Breast epithelium (tissue), 4 donors: ENCODE measurements at regions of chr2 and their contacts with region 1.

Region 1: GRCh38 chr2:122471753-122472152 is 716.3 kb downstream of the TSN start:
- DNase-seq: no peak
- H3K4me3 ChIP-seq: no peak overlapping the region
- H3K27ac ChIP-seq: no peak overlapping the region
- H3K4me1 ChIP-seq: no peaks in the 10 kb centered on the region
- H3K27me3 ChIP-seq: no peaks in the 10 kb centered on the region
- CTCF ChIP-seq: no peak
- POLR2A ChIP-seq: no peak

Region 2: GRCh38 chr2:122519366-122519765 is 47.6 kb after region 1 on chr2:
- intact Hi-C with region 1: loop called (anchors 2 kb)
- DNase-seq: no peak
- H3K4me3 ChIP-seq: no peak overlapping the region
- H3K27ac ChIP-seq: no peak overlapping the region
- H3K4me1 ChIP-seq: no peaks in the 10 kb centered on the region
- H3K27me3 ChIP-seq: no peaks in the 10 kb centered on the region
- CTCF ChIP-seq: no peak
- POLR2A ChIP-seq: no peak

Region 3: GRCh38 chr2:123061534-123061933 is 589.8 kb after region 1 on chr2:
- intact Hi-C with region 1: no loop called
- DNase-seq: no peak
- H3K4me3 ChIP-seq: no peak overlapping the region
- H3K27ac ChIP-seq: no peak overlapping the region
- H3K4me1 ChIP-seq: no peaks in the 10 kb centered on the region
- H3K27me3 ChIP-seq: no peaks in the 10 kb centered on the region
- CTCF ChIP-seq: no peak
- POLR2A ChIP-seq: no peak